Endothelial cell of umbilical vein (primary cell): ENCODE measurements at regions of chr2 and their contacts with region 1.

Region 1: DNA sequence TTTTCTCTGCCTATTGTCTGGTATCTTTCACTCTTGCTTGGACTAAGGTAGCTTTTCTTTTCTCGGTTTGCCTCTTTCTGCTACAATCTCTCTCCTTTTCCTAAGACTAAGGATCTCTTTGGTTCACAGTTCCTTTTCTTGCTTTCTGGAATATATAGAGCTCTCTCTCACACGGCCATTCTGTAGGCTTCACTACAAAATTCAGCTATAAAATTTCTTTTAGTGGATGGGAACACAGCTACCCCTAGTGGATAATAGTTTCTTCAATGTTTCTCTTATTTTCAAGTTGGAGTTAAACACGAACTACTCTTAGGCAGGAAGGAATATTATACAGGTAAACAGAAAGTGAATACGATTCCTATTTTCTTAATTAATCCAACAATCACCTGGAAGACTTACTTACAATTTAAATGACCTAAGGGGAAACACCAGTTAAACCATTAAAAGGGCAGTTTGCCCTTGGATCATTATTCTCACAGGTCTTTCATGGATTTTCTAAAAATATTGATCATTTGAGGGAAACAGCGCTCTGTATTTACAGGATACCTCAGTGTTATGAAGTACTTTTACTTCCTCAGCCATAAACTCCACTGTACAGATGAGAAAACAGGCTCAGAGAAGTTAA is 140.5 kb downstream of the LRP2 start:
- DNase-seq: peak; percentile 63
- H3K4me3 ChIP-seq: no peak overlapping the region
- H3K27ac ChIP-seq: no peak overlapping the region
- H3K4me1 ChIP-seq: peaks cover 4% of the 10 kb centered on the region
- H3K27me3 ChIP-seq: no peaks in the 10 kb centered on the region
- CTCF ChIP-seq: peak; percentile 25 to 34
- POLR2A ChIP-seq: no peak

Region 2: DNA sequence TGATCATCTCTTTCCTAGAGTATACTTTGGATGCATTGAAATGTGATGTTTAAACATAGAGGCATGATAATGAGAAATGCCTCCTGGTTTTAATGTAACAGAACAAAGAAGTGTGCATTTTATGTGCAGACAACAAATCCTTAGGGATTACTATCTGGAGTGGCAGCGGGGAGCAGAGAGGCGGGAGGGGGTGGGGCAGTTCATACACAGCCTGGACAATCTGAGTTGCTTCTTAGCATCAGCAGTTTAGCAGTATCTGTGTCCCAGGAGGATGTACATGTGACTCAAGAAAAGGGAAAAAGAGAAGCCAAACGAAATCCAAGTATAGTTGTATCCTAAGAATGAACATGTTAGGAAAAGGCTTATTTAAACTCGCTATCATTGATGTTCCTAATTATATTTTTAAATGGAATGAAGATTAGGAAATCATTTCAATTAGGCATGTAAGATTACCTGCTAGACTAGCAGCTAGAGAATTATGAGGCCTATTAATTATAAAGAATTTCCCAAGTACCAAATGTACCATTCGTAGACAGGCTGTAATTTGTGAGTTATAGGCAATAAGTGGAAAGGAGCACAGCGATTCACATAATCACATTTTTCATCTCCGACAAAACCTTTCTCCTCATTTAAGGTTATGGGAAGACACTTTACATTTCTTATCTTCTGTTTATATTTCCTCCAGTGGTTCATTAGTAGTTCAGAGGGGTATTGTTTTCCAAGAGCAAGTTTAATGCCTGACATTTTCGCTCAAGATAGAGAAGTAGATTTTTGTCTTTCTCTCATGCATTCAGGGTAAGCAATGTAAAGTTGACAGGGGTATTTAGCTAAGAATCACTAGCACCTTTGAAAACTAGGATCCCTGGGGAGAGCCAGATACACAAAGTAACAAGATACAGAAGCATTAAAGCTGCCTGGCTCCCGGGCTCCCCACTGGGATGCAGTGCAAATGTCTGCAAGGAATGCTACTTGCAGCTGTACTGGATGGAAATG is 560.7 kb before region 1 on chr2:
- CTCF ChIA-PET with region 1: no interaction called
- POLR2A ChIA-PET with region 1: no interaction called
- dilution Hi-C with region 1: no loop called
- intact Hi-C with region 1: no loop called
- DNase-seq: no peak
- H3K4me3 ChIP-seq: no peak overlapping the region
- H3K27ac ChIP-seq: no peak overlapping the region
- H3K4me1 ChIP-seq: no peaks in the 10 kb centered on the region
- H3K27me3 ChIP-seq: no peaks in the 10 kb centered on the region
- CTCF ChIP-seq: no peak
- POLR2A ChIP-seq: no peak

Region 3: GRCh38 chr2:168773719-168774521 is 447.9 kb before region 1 on chr2:
- CTCF ChIA-PET with region 1: interaction called, 4 read pairs
- POLR2A ChIA-PET with region 1: no interaction called
- dilution Hi-C with region 1: no loop called
- intact Hi-C with region 1: loop called (anchors 1 kb)
- DNase-seq: peak; percentile 82
- H3K4me3 ChIP-seq: no peak overlapping the region
- H3K27ac ChIP-seq: no peak overlapping the region
- H3K4me1 ChIP-seq: peaks cover 4% of the 10 kb centered on the region
- H3K27me3 ChIP-seq: no peaks in the 10 kb centered on the region
- CTCF ChIP-seq: peak; percentile 93 to 96
- POLR2A ChIP-seq: no peak

Region 4: GRCh38 chr2:168948621-168949212 is 273.1 kb before region 1 on chr2:
- CTCF ChIA-PET with region 1: interaction called, 21 read pairs
- POLR2A ChIA-PET with region 1: no interaction called
- dilution Hi-C with region 1: no loop called
- intact Hi-C with region 1: loop called (anchors 2 kb)
- DNase-seq: peak; percentile 31
- H3K4me3 ChIP-seq: no peak overlapping the region
- H3K27ac ChIP-seq: no peak overlapping the region
- H3K4me1 ChIP-seq: no peaks in the 10 kb centered on the region
- H3K27me3 ChIP-seq: no peaks in the 10 kb centered on the region
- CTCF ChIP-seq: peak; percentile 55 to 58
- POLR2A ChIP-seq: no peak

Region 5: GRCh38 chr2:169119126-169119770 is 102.6 kb before region 1 on chr2:
- CTCF ChIA-PET with region 1: interaction called, 16 read pairs
- POLR2A ChIA-PET with region 1: no interaction called
- dilution Hi-C with region 1: no loop called
- intact Hi-C with region 1: no loop called
- DNase-seq: no peak
- H3K4me3 ChIP-seq: no peak overlapping the region
- H3K27ac ChIP-seq: no peak overlapping the region
- H3K4me1 ChIP-seq: no peaks in the 10 kb centered on the region
- H3K27me3 ChIP-seq: no peaks in the 10 kb centered on the region
- CTCF ChIP-seq: no peak
- POLR2A ChIP-seq: no peak

Region 6: DNA sequence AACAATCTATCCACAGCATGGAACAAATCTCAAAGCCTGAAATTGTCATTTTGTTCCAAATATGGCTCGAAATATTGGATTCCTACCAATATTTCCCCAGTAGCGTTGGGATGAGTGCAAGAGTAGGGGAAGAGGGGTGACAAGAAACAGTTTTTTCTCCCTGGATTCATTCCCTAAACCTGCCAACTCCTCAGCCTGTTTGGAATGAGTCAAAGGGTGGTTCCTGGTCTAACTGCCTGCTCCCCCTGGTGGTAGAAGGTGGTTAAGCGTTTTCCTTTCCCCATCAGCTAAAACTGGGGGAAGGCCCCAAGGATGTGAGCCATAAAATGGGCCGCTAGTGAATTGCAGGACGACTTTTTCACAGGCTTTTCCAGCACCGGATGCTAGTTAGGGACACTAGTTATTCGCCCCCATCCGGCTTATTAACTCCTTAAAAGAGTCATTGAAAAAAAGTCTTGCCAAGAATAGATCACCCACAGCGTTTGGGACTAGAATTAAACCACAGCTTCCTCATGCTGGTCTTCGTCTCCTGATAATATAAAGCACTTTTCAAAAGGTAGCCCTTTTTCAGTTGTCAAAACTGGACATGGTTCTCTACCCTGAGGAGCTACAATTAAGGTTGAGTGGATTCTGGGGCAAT is 80.0 kb before region 1 on chr2:
- CTCF ChIA-PET with region 1: interaction called, 31 read pairs
- POLR2A ChIA-PET with region 1: no interaction called
- dilution Hi-C with region 1: no loop called
- intact Hi-C with region 1: loop called (anchors 2 kb)
- DNase-seq: peak; percentile 58
- H3K4me3 ChIP-seq: no peak overlapping the region
- H3K27ac ChIP-seq: no peak overlapping the region
- H3K4me1 ChIP-seq: peaks cover 3% of the 10 kb centered on the region
- H3K27me3 ChIP-seq: no peaks in the 10 kb centered on the region
- CTCF ChIP-seq: peak; percentile 85 to 90
- POLR2A ChIP-seq: no peak

Region 7: DNA sequence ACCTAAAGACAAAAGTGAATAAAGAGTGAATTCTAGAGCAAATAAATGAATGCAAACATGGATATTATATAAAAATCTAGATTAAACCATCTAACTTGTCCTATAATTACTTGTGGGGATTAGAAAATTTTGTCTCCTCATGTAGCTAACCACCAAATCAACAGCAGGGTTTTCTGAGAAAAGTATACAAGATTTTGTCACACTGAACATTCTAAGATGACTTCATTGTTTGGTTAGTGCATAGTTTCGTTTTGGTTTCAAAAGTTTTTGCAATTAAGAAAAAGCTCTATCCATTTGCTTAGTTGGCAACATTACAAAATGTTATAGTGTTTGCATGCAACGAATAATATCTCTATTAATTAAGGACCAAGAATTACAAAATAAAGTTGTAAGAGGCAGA is 15.4 kb after region 1 on chr2:
- CTCF ChIA-PET with region 1: interaction called, 11 read pairs
- POLR2A ChIA-PET with region 1: no interaction called
- dilution Hi-C with region 1: no loop called
- intact Hi-C with region 1: no loop called
- DNase-seq: no peak
- H3K4me3 ChIP-seq: no peak overlapping the region
- H3K27ac ChIP-seq: no peak overlapping the region
- H3K4me1 ChIP-seq: no peaks in the 10 kb centered on the region
- H3K27me3 ChIP-seq: peaks cover 2 to 6% of the 10 kb centered on the region in 2 experiments
- CTCF ChIP-seq: no peak
- POLR2A ChIP-seq: no peak